ENCODE measurements at regions of chrX and their contacts with region 1.

Region 1: DNA sequence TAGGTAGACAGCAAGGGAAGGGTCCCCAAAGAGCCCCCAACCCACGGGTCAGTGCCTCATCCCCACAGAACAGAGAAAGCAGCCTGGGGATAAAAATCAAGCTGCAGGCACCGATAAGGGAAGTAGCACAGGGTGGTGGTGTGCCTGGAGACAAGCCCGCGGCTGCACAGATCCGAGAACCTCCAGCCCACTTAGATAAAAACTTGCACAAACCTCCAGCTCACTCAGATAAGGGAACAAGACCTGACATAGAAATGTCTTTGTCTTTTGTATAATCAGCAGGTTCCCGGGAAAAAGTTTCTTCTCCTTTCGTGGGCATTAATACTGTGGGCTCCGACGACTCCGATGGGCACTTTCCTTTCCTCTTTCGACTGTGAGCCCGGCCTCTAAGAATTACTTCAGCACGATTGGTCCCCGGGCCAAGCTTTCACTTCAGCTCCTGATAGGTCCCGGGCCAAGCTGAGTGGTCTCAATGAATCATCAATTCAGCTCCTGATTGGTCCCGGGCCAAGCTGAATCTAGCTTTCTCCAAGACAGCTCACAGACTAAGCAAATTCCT is 32.4 kb downstream of the PRDX4 start:
- DNase-seq: no peak

Region 2: DNA sequence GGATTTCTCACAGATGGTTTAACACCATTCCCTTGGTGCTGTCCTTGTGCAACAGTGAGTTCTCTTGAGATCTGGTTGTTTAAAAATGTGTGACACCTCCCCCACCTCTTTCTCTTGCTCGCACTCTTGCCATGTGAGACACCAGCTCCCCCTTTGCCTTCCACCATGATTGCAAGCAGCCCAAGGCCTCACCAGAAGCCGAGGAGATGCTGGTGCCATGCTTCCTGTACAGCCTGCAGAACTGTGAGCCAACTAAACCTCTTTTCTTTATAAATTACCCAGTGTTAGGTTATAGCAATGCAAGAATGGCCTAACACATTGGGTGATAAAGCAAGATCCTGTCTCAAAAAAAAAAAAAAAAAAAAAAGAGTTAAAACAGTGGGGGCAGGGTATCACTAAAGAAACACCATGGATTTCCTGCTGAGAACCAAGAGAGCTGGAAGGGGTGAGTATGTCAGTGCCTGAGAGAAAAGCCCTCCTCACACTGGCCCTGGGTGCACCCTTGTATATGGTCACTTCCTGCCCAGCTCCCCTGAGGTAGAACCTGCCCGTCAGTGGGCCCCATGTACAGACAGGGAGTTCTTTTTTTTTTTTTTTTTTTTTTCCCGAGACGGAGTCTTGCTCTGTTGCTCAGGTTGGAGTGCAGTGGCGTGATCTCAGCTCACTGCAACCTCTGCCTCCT is 161.6 kb after region 1 on chrX:
- in situ Hi-C with region 1: no loop called
- DNase-seq: no peak

Region 3: DNA sequence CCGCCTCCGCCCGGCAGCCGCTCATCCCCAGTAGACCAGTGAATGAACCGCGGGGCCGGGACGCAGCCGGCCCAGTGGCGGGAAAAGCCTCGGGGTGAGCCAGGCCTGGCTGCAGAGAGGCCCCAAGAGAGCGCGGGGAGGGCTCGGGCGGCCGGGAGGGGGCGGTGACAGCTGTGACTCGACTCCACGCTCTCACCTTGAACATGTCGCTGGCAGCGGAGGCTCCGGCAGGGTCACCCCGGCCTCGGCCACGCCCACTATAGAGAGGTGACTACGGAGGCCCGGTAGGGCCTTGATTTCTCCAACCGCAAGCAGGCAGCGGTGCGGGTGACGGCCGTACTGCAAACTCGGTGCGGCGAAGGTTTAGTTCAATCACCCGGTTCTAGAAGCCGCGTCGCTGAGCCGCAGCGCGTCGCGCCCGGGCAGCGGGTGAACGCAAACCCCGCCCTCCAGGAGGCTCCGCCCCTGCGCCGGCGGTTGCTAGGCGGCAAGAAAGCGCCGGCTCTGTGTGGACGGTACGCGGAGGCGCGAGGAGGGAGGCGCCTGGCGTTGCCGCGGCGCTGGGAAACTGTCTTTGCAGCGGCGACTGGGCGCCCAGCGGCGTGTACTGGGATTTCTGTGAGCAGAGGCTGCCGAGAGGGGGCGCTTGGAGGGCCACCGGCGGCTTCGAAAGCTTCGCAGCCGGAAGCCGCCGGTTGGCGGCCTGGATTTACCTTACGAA is 207.9 kb after region 1 on chrX and contains the starts of genes APOO and CXorf58:
- in situ Hi-C with region 1: loop called (anchors 10 kb)
- DNase-seq: peak; percentile 83